Esophagus squamous epithelium (tissue), 5 donors: ENCODE measurements at regions of chrX and their contacts with region 1.

Region 1: GRCh38 chrX:68822641-68823410 is 6.0 kb upstream of the EFNB1 start:
- DNase-seq: no peak
- H3K4me3 ChIP-seq: no peak overlapping the region
- H3K27ac ChIP-seq: no peak overlapping the region
- H3K4me1 ChIP-seq: peaks cover 0 to 10% (median 3%) of the 10 kb centered on the region in 3 donors
- H3K27me3 ChIP-seq: no peaks in the 10 kb centered on the region
- CTCF ChIP-seq: peak; percentile 22 to 63 (median 48)
- POLR2A ChIP-seq: no peak

Region 2: GRCh38 chrX:69285881-69286564 is 463.2 kb after region 1 on chrX:
- intact Hi-C with region 1: loop called (anchors 5 kb)
- DNase-seq: no peak
- H3K4me3 ChIP-seq: peak overlapping the region; percentile 18 to 61 (median 44)
- H3K27ac ChIP-seq: peak overlapping the region in 3 of 4 donors; percentile 43 to 54 (median 49)
- H3K4me1 ChIP-seq: peaks cover 6 to 25% (median 11%) of the 10 kb centered on the region in 3 donors
- H3K27me3 ChIP-seq: peaks cover 0 to 4% (median 0%) of the 10 kb centered on the region in 4 donors
- CTCF ChIP-seq: peak; percentile 67 to 88 (median 80)
- POLR2A ChIP-seq: no peak